CD8-positive, alpha-beta memory T cell (primary cell): ENCODE measurements at regions of chr22 and their contacts with region 1.

Region 1: GRCh38 chr22:41603873-41604332 is 14.3 kb upstream of the PMM1 start:
- DNase-seq: peak; percentile 44 to 87 (median 59)
- H3K4me3 ChIP-seq: no peak overlapping the region
- H3K4me3 Mint-ChIP-seq: peak overlapping the region; percentile 41 to 85 (median 66)
- H3K27ac ChIP-seq: no peak overlapping the region
- H3K27ac Mint-ChIP-seq: peak overlapping the region; percentile 43 to 96 (median 70)
- H3K4me1 ChIP-seq: peaks cover 18% of the 10 kb centered on the region
- H3K4me1 Mint-ChIP-seq: peaks cover 23 to 29% (median 24%) of the 10 kb centered on the region in 3 donors
- H3K27me3 ChIP-seq: no peaks in the 10 kb centered on the region
- H3K27me3 Mint-ChIP-seq: peaks cover 0 to 13% of the 10 kb centered on the region in 2 donors

Region 2: DNA sequence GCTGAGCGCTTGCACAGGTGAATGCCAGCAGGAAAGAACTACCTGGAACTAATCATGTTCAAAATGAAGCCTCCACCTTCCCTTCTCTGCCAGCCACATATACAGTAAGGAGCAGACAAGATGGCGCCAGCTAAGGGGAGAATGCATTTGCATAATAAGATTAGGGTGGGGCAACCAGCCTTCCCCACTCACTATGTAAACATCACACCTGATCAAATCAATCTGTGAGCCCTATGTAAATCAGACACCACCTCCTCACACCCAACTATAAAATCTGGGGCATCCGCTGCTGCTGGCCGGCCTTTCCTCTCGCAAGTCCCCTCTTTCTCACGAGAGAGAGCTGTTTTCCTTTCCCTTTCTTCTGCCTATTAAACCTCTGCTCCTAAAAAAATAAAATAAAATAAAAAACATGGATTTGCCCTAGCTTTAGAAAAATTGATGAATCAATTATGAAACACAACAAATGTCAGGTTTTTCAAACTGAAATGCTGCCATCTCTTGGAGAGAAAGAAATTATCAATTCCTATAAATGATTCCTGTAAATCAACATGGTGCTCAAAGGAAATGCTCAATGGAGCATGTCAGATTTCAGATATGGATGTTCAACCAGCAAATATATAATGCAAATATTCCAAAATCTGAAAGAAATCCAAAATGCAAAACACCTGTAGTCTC is 1124.6 kb before region 1 on chr22:
- CTCF ChIA-PET with region 1: no interaction called
- POLR2A ChIA-PET with region 1: interaction called, 11 read pairs
- DNase-seq: no peak
- H3K4me3 ChIP-seq: no peak overlapping the region
- H3K4me3 Mint-ChIP-seq: peak overlapping the region in 3 of 7 donors; percentile 24 to 54 (median 52)
- H3K27ac ChIP-seq: no peak overlapping the region
- H3K27ac Mint-ChIP-seq: peak overlapping the region in 5 of 8 donors; percentile 12 to 81 (median 60)
- H3K4me1 ChIP-seq: peaks cover 10% of the 10 kb centered on the region
- H3K4me1 Mint-ChIP-seq: peaks cover 14 to 29% (median 18%) of the 10 kb centered on the region in 3 donors
- H3K27me3 ChIP-seq: no peaks in the 10 kb centered on the region
- H3K27me3 Mint-ChIP-seq: no peaks in the 10 kb centered on the region

Region 3: GRCh38 chr22:41925655-41926460 is 322.0 kb after region 1 on chr22:
- CTCF ChIA-PET with region 1: no interaction called
- POLR2A ChIA-PET with region 1: no interaction called
- DNase-seq: peak; percentile 75 to 86 (median 78)
- H3K4me3 ChIP-seq: peak overlapping the region; percentile 34
- H3K4me3 Mint-ChIP-seq: peak overlapping the region; percentile 82 to 91 (median 85)
- H3K27ac ChIP-seq: no peak overlapping the region
- H3K27ac Mint-ChIP-seq: peak overlapping the region in 6 of 8 donors; percentile 65 to 87 (median 78)
- H3K4me1 ChIP-seq: peaks cover 10% of the 10 kb centered on the region
- H3K4me1 Mint-ChIP-seq: peaks cover 4 to 34% (median 9%) of the 10 kb centered on the region in 3 donors
- H3K27me3 ChIP-seq: no peaks in the 10 kb centered on the region
- H3K27me3 Mint-ChIP-seq: peaks cover 3 to 6% of the 10 kb centered on the region in 2 donors